ENCODE measurements at regions of chr10 and their contacts with region 1.

Region 1: GRCh38 chr10:98748298-98748697 is 301.6 kb upstream of the HPS1 start:
- DNase-seq: peak; percentile 23
- H3K4me3 ChIP-seq: no peak overlapping the region
- H3K27ac ChIP-seq: no peak overlapping the region
- H3K4me1 ChIP-seq: no peaks in the 10 kb centered on the region
- H3K27me3 ChIP-seq: peaks cover 2% of the 10 kb centered on the region
- CTCF ChIP-seq: peak; percentile 31 to 63

Region 2: GRCh38 chr10:98141484-98142073 is 606.7 kb before region 1 on chr10:
- CTCF ChIA-PET with region 1: no interaction called
- dilution Hi-C with region 1: no loop called
- in situ Hi-C with region 1: no loop called
- intact Hi-C with region 1: no loop called
- DNase-seq: no peak
- H3K4me3 ChIP-seq: no peak overlapping the region
- H3K27ac ChIP-seq: no peak overlapping the region
- H3K4me1 ChIP-seq: no peaks in the 10 kb centered on the region
- H3K27me3 ChIP-seq: no peaks in the 10 kb centered on the region
- CTCF ChIP-seq: no peak

Region 3: DNA sequence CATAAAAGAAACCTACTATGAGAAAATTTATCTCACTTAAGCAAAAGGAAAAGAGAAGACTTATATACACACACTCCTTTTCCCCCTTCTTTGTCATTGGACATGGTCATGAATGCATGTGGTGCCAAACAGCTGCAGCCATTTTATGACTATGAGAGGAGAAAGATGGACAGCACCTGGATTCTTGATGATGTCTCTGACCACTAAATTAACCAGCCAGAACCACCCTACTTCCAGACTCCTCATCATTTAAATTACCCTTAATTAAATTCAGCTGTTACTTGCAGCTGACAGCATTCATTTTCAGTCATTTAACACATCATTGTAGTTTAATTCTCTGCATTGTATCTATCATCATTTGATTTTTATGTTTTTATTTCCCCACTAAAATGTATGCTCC is 77.4 kb after region 1 on chr10:
- CTCF ChIA-PET with region 1: no interaction called
- dilution Hi-C with region 1: no loop called
- in situ Hi-C with region 1: no loop called
- intact Hi-C with region 1: no loop called
- DNase-seq: no peak
- H3K4me3 ChIP-seq: no peak overlapping the region
- H3K27ac ChIP-seq: no peak overlapping the region
- H3K4me1 ChIP-seq: no peaks in the 10 kb centered on the region
- H3K27me3 ChIP-seq: no peaks in the 10 kb centered on the region
- CTCF ChIP-seq: no peak

Region 4: DNA sequence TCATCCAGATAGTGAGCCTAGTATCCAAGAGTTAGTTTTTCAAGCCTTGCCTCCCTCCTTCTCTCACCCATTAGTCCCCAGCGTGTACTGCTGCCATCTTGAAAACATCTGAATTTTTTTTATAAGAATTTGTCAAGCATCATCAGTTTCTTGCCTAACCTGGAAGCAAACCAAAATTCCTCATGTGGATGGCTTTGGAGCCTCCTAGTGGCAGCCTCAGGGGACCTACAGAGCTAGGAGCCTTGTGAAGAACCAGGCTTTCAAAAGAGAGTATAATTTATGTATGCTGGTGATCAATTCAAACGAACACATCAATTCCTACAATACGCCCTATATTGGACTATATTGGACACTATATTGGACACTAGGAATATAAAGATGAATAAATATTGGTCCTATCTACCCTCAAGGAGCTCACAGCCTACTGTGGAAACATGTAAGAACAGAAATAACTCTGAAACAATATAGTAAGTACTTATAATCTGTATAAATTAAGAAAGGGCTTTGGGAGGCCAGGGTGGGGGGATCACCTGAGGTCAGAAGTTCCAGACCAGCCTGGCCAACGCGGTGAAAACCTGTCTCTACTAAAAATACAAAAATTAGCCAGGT is 423.9 kb after region 1 on chr10:
- CTCF ChIA-PET with region 1: no interaction called
- dilution Hi-C with region 1: no loop called
- in situ Hi-C with region 1: no loop called
- intact Hi-C with region 1: loop called (anchors 1 kb)
- DNase-seq: peak; percentile 29
- H3K4me3 ChIP-seq: no peak overlapping the region
- H3K27ac ChIP-seq: no peak overlapping the region
- H3K4me1 ChIP-seq: no peaks in the 10 kb centered on the region
- H3K27me3 ChIP-seq: no peaks in the 10 kb centered on the region
- CTCF ChIP-seq: peak; percentile 69 to 91

Region 5: DNA sequence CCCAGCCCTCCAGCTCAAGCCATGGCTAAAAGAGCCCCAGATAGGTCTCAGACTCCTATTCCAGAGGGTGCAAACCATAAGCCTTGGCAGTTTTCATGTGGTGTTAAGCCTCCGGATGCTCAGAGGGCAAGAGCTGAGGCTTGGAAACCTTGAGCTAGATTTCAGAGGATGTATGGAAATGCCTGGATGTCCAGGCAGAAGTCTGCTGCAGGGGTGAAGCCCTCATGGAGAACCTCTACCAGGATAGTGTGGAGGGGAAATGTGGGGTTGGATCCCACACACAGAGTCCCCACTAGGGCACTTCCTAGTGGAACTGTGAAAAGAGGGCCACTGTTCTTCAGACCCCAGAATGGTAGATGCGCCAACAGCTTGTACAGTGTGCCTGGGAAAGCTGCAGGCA is 500.5 kb after region 1 on chr10:
- CTCF ChIA-PET with region 1: no interaction called
- dilution Hi-C with region 1: no loop called
- in situ Hi-C with region 1: no loop called
- intact Hi-C with region 1: loop called (anchors 5 kb)
- DNase-seq: no peak
- H3K4me3 ChIP-seq: no peak overlapping the region
- H3K27ac ChIP-seq: no peak overlapping the region
- H3K4me1 ChIP-seq: no peaks in the 10 kb centered on the region
- H3K27me3 ChIP-seq: no peaks in the 10 kb centered on the region
- CTCF ChIP-seq: no peak

Measured in mammary epithelial cell (primary cell).